Activated CD4-positive, alpha-beta memory T cell treated with anti-CD3 and anti-CD28 coated beads for 36 hours (primary cell): ENCODE measurements at regions of chr5 and their contacts with region 1.

Region 1: GRCh38 chr5:134225618-134226440 is at the start of gene PPP2CA:
- DNase-seq: peak; percentile 100
- H3K4me3 Mint-ChIP-seq: peak within 1 kb of the TSS; percentile 95
- H3K27ac Mint-ChIP-seq: peak within 1 kb of the TSS; percentile 97
- H3K4me1 Mint-ChIP-seq: peaks cover 50% of the 10 kb centered on the region
- H3K27me3 Mint-ChIP-seq: no peaks in the 10 kb centered on the region
- total RNA-seq, gene PPP2CA: 144 to 164 TPM

Region 2: DNA sequence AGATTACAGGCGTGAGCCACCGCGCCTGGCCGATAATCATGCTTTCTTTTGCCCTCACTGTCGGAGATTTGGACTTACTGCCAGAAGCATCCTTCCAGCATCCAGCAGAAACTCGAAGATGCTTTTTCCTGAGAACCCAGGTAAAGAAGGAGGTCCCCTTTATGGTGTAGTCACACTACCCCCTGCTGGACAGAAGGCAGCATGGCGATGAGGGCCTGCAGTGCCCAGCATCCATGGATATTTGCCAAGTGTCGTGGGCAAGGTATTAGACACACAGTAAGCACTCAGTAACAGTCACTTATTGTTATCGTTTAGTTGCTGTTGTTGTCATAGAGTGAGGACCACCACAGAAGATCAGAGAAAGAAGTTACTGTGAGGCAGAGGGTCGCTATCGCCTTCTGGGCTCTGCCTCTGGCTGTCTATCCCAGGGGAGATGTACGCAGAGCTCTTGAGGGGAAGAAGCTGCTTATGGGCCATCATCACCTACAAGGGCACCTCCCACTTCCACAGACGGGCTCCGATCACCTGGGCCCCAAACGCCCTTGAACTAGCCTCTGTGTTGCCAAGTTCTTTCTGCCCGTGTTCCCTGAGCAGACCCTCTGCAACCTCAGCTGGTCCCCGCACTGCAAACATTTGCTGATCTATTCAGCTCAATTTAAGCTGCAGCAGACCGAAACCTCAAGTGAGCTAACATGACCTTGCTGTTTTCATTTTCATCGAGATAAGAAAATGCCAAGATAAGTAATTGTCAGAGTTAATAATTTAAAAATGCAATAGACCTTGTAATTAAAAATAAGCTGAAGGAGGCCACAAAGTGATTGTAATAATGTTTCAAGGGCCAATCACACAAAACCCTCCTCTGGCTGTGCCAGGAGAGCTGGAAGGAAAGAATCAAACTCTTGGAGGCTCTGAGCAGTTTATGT is 281.3 kb before region 1 on chr5:
- CTCF ChIA-PET with region 1: no interaction called
- POLR2A ChIA-PET with region 1: no interaction called
- intact Hi-C with region 1: no loop called
- DNase-seq: peak; percentile 70
- H3K4me3 Mint-ChIP-seq: no peak overlapping the region
- H3K27ac Mint-ChIP-seq: no peak overlapping the region
- H3K4me1 Mint-ChIP-seq: peaks cover 3% of the 10 kb centered on the region
- H3K27me3 Mint-ChIP-seq: no peaks in the 10 kb centered on the region

Region 3: DNA sequence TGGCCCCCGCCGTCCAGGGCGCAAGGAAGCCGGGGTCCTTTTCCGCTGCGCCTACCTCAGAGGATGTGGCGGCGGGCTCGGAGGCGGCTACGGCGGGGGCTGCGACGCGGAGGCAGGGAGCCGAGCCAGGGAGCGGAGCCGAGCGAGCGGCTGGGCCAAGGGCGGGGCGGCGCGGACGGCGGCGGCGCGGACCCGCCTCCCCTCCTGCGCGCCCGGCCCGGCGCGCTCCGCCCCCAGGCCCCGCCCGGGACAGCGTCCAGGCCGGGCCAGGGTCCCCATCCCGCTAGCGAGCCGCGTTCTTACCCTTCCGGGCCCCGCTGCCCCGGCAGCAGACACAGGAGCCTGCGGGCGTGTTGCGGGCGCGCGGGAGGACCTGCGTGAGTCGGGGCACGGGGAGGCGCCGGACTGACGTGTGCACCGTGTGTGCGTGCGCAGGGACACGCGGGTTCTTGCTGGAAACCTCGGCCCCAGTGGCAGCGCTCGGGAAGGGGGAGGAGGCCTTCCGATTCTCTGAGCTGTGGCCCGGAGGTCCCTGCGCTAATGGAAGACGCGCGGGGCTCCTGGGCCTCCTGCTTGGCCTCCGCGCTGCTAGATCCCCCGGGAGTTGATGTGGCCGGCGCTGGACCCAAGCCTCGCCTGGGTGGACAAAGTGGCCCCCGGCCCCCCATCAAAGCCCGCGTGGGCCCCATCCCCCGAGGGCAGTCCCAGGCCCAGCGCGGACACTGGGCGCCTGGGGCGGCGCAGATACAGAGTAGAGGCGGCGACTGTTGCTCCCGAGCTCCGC is 221.0 kb before region 1 on chr5 and contains the start of gene VDAC1:
- CTCF ChIA-PET with region 1: no interaction called
- POLR2A ChIA-PET with region 1: interaction called, 12 read pairs
- intact Hi-C with region 1: loop called (anchors 5 kb)
- DNase-seq: peak; percentile 85
- H3K4me3 Mint-ChIP-seq: peak within 1 kb of the TSS; percentile 90
- H3K27ac Mint-ChIP-seq: peak within 1 kb of the TSS; percentile 97
- H3K4me1 Mint-ChIP-seq: peaks cover 37% of the 10 kb centered on the region
- H3K27me3 Mint-ChIP-seq: no peaks in the 10 kb centered on the region
- total RNA-seq, gene VDAC1: 407 to 416 TPM

Region 4: GRCh38 chr5:134176511-134177368 is 49.1 kb before region 1 on chr5 and contains the start of gene SKP1:
- CTCF ChIA-PET with region 1: interaction called, 7 read pairs
- POLR2A ChIA-PET with region 1: interaction called, 42 read pairs
- intact Hi-C with region 1: loop called (anchors 1 kb)
- DNase-seq: peak; percentile 88
- H3K4me3 Mint-ChIP-seq: peak within 1 kb of the TSS; percentile 95
- H3K27ac Mint-ChIP-seq: peak within 1 kb of the TSS; percentile 96
- H3K4me1 Mint-ChIP-seq: peaks cover 33% of the 10 kb centered on the region
- H3K27me3 Mint-ChIP-seq: no peaks in the 10 kb centered on the region
- total RNA-seq, gene SKP1: 284 to 286 TPM

Region 5: GRCh38 chr5:134289509-134290113 is 63.8 kb after region 1 on chr5:
- CTCF ChIA-PET with region 1: interaction called, 5 read pairs
- POLR2A ChIA-PET with region 1: no interaction called
- intact Hi-C with region 1: loop called (anchors 5 kb)
- DNase-seq: peak; percentile 42
- H3K4me3 Mint-ChIP-seq: no peak overlapping the region
- H3K27ac Mint-ChIP-seq: no peak overlapping the region
- H3K4me1 Mint-ChIP-seq: peaks cover 2% of the 10 kb centered on the region
- H3K27me3 Mint-ChIP-seq: peaks cover 5% of the 10 kb centered on the region

Region 6: DNA sequence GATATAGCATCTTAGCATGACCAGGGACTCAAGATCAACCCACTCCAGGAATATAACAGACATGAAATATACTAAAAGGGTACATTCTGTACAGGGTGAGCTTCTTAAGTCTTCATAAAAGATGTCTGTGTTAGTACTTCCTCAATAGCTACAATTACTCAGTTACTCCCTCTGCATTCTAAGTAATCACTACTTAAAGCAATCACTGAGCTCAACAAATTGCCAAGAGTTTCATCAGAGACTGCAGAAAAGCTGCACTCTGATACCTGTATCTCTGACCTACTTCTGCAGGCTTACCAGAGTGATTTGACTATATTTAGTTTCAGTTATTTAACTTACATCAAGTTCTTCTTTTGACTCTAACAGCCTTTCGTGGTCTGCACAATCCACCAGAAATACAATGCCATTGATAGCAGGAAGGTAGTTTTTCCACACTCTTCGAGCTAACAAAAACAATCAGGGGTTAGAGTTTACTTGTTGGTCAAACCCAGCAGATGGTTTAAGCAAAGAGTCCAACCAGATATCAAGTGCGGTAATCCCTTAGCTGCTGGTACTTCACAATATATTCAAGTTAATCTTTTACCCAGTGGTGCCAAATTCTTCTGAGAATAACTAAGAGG is 383.5 kb after region 1 on chr5:
- CTCF ChIA-PET with region 1: no interaction called
- POLR2A ChIA-PET with region 1: interaction called, 5 read pairs
- intact Hi-C with region 1: loop called (anchors 5 kb)
- DNase-seq: peak; percentile 19
- H3K4me3 Mint-ChIP-seq: peak overlapping the region; percentile 52
- H3K27ac Mint-ChIP-seq: peak overlapping the region; percentile 97
- H3K4me1 Mint-ChIP-seq: peaks cover 54% of the 10 kb centered on the region
- H3K27me3 Mint-ChIP-seq: no peaks in the 10 kb centered on the region

Region 7: DNA sequence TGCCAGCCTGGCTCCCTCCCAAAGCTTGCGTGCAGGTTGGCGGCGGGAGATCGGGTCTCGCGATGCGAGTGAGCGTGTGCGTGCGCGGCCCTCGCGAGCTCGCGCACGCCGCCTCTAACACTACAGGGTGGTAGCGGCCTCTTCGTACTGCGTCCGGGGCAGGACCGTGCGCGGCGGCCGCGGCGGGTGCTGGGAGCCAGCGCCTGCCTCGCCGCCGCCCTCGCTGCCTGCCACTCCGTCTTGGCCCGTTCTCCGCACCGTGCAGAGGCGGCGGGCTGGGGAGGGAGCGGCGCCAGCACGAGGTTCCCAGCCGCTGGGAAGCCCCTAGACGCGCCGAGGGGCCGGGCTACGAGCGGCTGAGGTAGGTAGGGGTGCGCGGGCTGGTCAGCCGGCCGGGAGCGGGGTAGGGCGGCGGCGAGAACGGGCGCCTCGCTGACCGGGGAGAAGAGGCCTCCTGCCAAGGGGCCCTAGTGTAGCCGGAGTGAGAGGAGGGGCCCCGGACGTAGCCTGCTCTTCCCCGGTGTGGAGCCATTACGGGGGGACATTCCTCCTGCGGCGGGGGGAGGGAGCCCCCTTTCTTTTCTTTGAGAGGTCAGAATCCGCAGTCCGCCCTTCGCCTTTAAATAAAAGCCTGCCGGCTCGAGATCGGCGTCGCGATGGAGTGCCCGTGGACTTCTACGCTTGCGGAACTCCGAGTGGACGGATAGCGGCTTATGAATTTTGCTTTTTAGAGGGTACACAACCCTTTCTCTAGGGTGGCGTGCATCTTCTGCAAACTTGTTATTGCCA is 620.2 kb after region 1 on chr5 and contains the start of gene C5orf24:
- CTCF ChIA-PET with region 1: no interaction called
- POLR2A ChIA-PET with region 1: no interaction called
- intact Hi-C with region 1: loop called (anchors 2 kb)
- DNase-seq: peak; percentile 96
- H3K4me3 Mint-ChIP-seq: peak within 1 kb of the TSS; percentile 86
- H3K27ac Mint-ChIP-seq: peak within 1 kb of the TSS; percentile 96
- H3K4me1 Mint-ChIP-seq: peaks cover 28% of the 10 kb centered on the region
- H3K27me3 Mint-ChIP-seq: no peaks in the 10 kb centered on the region
- total RNA-seq, gene C5orf24: 21.9 to 25.2 TPM